Activated CD8-positive, alpha-beta T cell treated with anti-CD3 and anti-CD28 coated beads for 36 hours (primary cell): ENCODE measurements at regions of chr6 and their contacts with region 1.

Region 1: GRCh38 chr6:24991810-24992467 is 56.2 kb upstream of the RIPOR2 start:
- DNase-seq: peak; percentile 79
- ATAC-seq: peak; percentile 94
- H3K4me3 Mint-ChIP-seq: peak overlapping the region; percentile 14
- H3K27ac Mint-ChIP-seq: peak overlapping the region; percentile 89
- H3K4me1 Mint-ChIP-seq: peaks cover 49% of the 10 kb centered on the region
- H3K27me3 Mint-ChIP-seq: no peaks in the 10 kb centered on the region
- CTCF ChIP-seq: peak; percentile 78

Region 2: DNA sequence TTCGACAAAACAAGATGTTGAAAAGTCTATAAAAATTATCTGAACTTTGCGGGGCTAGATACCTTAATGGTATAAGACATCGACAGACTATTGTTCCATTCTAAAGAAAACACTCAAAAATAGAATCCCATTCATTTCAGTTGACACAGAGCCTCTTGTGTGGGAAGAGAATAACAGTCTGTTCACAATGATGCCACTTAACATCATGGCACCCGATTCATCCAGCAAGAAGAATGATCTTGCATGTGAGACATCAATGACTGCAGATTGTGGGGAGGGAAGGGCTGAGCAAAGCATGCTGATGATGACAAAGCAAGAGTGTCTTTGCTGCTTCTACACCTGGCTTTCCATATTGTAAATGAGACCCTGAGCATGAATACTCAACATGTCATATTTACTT is 143.5 kb before region 1 on chr6:
- CTCF ChIA-PET with region 1: interaction called, 125 read pairs
- POLR2A ChIA-PET with region 1: no interaction called
- intact Hi-C with region 1: no loop called
- DNase-seq: no peak
- ATAC-seq: no peak
- H3K4me3 Mint-ChIP-seq: no peak overlapping the region
- H3K27ac Mint-ChIP-seq: peak overlapping the region; percentile 31
- H3K4me1 Mint-ChIP-seq: peaks cover 48% of the 10 kb centered on the region
- H3K27me3 Mint-ChIP-seq: no peaks in the 10 kb centered on the region
- CTCF ChIP-seq: no peak

Region 3: DNA sequence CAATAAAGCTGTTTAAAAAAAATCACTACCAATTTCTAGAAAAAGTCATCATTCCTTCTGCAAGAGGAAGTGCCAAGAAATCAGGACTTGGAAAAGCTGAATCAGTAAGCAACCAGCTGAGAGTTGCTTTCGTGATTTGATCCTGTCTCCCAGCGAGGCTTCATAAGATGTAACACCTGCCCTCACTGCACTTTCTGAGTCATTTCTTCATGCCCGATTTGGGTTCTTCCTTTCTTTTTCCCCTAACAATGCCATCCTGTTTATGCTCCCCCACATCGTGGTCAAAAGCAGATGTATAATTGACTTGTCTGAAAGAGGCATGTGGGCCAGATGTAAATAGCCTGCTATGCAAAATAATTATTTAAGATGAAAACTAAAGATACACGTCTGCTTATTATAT is 108.3 kb before region 1 on chr6:
- CTCF ChIA-PET with region 1: interaction called, 19 read pairs
- POLR2A ChIA-PET with region 1: interaction called, 3 read pairs
- intact Hi-C with region 1: no loop called
- DNase-seq: peak; percentile 69
- ATAC-seq: peak; percentile 79
- H3K4me3 Mint-ChIP-seq: peak overlapping the region; percentile 49
- H3K27ac Mint-ChIP-seq: peak overlapping the region; percentile 97
- H3K4me1 Mint-ChIP-seq: peaks cover 84% of the 10 kb centered on the region
- H3K27me3 Mint-ChIP-seq: no peaks in the 10 kb centered on the region
- CTCF ChIP-seq: no peak

Region 4: GRCh38 chr6:24910961-24911712 is 80.8 kb before region 1 on chr6:
- CTCF ChIA-PET with region 1: interaction called, 73 read pairs
- POLR2A ChIA-PET with region 1: interaction called, 14 read pairs
- intact Hi-C with region 1: no loop called
- DNase-seq: peak; percentile 64
- ATAC-seq: peak; percentile 18
- H3K4me3 Mint-ChIP-seq: peak overlapping the region; percentile 97
- H3K27ac Mint-ChIP-seq: peak overlapping the region; percentile 96
- H3K4me1 Mint-ChIP-seq: peaks cover 73% of the 10 kb centered on the region
- H3K27me3 Mint-ChIP-seq: no peaks in the 10 kb centered on the region
- CTCF ChIP-seq: no peak

Region 5: GRCh38 chr6:24933868-24934401 is 58.0 kb before region 1 on chr6:
- CTCF ChIA-PET with region 1: interaction called, 186 read pairs
- POLR2A ChIA-PET with region 1: interaction called, 19 read pairs
- intact Hi-C with region 1: loop called (anchors 2 kb)
- DNase-seq: peak; percentile 61
- ATAC-seq: no peak
- H3K4me3 Mint-ChIP-seq: peak overlapping the region; percentile 92
- H3K27ac Mint-ChIP-seq: peak overlapping the region; percentile 95
- H3K4me1 Mint-ChIP-seq: peaks cover 73% of the 10 kb centered on the region
- H3K27me3 Mint-ChIP-seq: no peaks in the 10 kb centered on the region
- CTCF ChIP-seq: peak; percentile 97

Region 6: GRCh38 chr6:24974182-24975171 is 17.5 kb before region 1 on chr6:
- CTCF ChIA-PET with region 1: interaction called, 101 read pairs
- POLR2A ChIA-PET with region 1: interaction called, 7 read pairs
- intact Hi-C with region 1: no loop called
- DNase-seq: peak; percentile 70
- ATAC-seq: peak; percentile 90
- H3K4me3 Mint-ChIP-seq: peak overlapping the region; percentile 41
- H3K27ac Mint-ChIP-seq: peak overlapping the region; percentile 92
- H3K4me1 Mint-ChIP-seq: peaks cover 49% of the 10 kb centered on the region
- H3K27me3 Mint-ChIP-seq: no peaks in the 10 kb centered on the region
- CTCF ChIP-seq: no peak

Region 7: GRCh38 chr6:25017932-25018567 is 26.1 kb after region 1 on chr6:
- CTCF ChIA-PET with region 1: interaction called, 96 read pairs
- POLR2A ChIA-PET with region 1: interaction called, 4 read pairs
- intact Hi-C with region 1: no loop called
- DNase-seq: peak; percentile 94
- ATAC-seq: peak; percentile 80
- H3K4me3 Mint-ChIP-seq: peak overlapping the region; percentile 11
- H3K27ac Mint-ChIP-seq: peak overlapping the region; percentile 76
- H3K4me1 Mint-ChIP-seq: peaks cover 51% of the 10 kb centered on the region
- H3K27me3 Mint-ChIP-seq: no peaks in the 10 kb centered on the region
- CTCF ChIP-seq: peak; percentile 84

Region 8: GRCh38 chr6:25078141-25078540 is 86.2 kb after region 1 on chr6:
- CTCF ChIA-PET with region 1: no interaction called
- POLR2A ChIA-PET with region 1: no interaction called
- intact Hi-C with region 1: no loop called
- DNase-seq: no peak
- ATAC-seq: no peak
- H3K4me3 Mint-ChIP-seq: no peak overlapping the region
- H3K27ac Mint-ChIP-seq: no peak overlapping the region
- H3K4me1 Mint-ChIP-seq: peaks cover 5% of the 10 kb centered on the region
- H3K27me3 Mint-ChIP-seq: no peaks in the 10 kb centered on the region
- CTCF ChIP-seq: no peak